Endothelial cell of umbilical vein (primary cell): ENCODE measurements at regions of chr7 and their contacts with region 1.

Region 1: GRCh38 chr7:37430640-37431039 is 18.0 kb downstream of the ELMO1 start:
- DNase-seq: peak; percentile 93
- H3K4me3 ChIP-seq: no peak overlapping the region
- H3K27ac ChIP-seq: peak overlapping the region; percentile 73
- H3K4me1 ChIP-seq: peaks cover 20% of the 10 kb centered on the region
- H3K27me3 ChIP-seq: no peaks in the 10 kb centered on the region
- CTCF ChIP-seq: no peak
- POLR2A ChIP-seq: no peak

Region 2: GRCh38 chr7:37320501-37321468 is 109.9 kb before region 1 on chr7:
- CTCF ChIA-PET with region 1: no interaction called
- POLR2A ChIA-PET with region 1: no interaction called
- dilution Hi-C with region 1: no loop called
- intact Hi-C with region 1: no loop called
- DNase-seq: no peak
- H3K4me3 ChIP-seq: no peak overlapping the region
- H3K27ac ChIP-seq: no peak overlapping the region
- H3K4me1 ChIP-seq: no peaks in the 10 kb centered on the region
- H3K27me3 ChIP-seq: no peaks in the 10 kb centered on the region
- CTCF ChIP-seq: no peak
- POLR2A ChIP-seq: no peak

Region 3: DNA sequence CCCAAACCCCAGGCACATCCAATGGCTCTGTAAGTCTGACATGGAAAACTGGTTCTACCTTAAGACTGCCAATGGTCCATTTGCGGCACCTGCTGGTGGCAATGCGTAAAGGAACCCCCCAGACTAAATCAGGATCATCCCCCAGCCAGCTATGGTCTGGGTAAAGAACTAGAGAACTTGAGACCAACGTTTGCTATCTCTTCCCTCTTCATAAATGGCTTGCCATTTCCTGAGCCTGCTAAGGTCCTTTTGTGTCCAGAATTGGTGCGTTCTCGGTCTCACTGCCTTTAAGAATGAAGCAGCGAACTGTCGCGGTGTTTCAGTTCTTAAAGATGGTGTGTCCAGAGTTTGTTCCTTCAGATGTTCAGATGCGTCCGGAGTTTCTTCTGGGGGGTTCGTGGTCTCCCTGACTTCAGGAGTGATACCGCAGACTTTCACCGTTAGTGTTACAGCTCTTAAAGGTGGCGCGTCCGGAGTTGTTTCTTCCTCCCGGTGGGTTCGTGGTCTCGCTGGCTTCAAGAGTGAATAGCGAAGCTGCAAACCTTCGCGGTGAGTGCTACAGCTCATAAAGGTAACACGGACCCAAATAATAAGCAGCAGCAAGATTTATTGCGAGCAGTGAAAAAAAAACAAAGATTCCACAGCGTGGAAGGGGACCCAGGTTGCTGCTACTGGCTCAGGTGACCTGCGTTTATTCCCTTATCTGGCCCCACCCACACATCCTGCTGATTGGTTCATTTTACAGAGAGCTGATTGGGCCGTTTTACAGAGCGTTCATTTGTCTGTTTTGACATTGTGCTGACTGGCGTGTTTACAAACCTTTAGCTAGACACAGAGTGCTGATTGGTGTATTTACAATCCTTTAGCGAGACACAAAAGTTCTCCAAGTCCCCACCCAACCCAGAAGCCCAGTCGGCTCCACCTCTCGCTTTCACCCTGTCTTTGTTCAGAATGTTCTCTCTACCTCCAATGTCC is 77.4 kb before region 1 on chr7:
- CTCF ChIA-PET with region 1: no interaction called
- POLR2A ChIA-PET with region 1: no interaction called
- dilution Hi-C with region 1: no loop called
- intact Hi-C with region 1: loop called (anchors 1 kb)
- DNase-seq: no peak
- H3K4me3 ChIP-seq: no peak overlapping the region
- H3K27ac ChIP-seq: peak overlapping the region; percentile 66
- H3K4me1 ChIP-seq: peaks cover 21% of the 10 kb centered on the region
- H3K27me3 ChIP-seq: no peaks in the 10 kb centered on the region
- CTCF ChIP-seq: peak; percentile 6 to 11
- POLR2A ChIP-seq: no peak

Region 4: DNA sequence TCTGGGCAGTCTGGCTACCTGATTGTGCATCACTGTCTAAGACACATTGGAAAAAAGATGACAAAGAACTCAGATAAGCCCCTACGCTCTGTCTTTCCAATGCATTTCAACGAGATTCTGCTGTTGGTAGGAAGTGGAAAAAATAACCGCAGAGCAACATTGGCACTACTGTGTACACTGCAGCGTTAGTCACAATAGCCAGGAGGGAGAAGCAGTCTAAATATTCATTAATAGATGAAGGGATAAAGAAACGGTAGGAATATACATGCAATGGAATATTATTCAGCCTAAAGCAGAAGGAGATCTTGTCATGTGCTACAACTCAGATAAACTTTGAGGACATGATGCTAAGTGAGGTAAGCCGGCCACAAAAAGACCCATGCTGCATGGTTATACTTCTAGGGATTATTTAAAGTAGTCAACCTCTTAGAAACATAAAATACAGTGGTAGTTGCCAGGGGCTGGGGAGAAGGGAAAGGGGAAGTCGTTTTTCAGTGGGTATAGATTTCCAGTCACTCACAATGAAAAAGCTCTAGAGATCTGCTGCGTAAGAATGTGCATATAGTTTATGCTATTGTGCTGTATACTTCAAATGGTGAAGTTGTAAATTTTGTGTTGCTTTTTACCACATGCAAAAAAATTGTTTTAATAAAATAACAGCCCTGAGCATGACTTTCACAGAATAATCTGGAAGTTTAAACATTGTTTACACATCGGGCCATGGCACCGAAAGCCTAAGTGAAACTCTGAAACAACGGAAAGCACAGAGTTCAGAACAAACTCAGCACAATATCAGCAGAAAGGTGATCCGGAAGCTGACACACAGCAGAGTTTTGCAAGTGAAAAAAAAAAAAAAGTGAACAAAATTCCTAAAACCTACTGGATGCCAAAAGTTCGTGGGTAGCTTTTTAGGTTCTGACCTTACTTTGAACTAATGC is 22.1 kb before region 1 on chr7:
- CTCF ChIA-PET with region 1: interaction called, 4 read pairs
- POLR2A ChIA-PET with region 1: no interaction called
- dilution Hi-C with region 1: no loop called
- intact Hi-C with region 1: loop called (anchors 2 kb)
- DNase-seq: peak; percentile 73
- H3K4me3 ChIP-seq: peak overlapping the region in 1 of 3 experiments; percentile 49
- H3K27ac ChIP-seq: no peak overlapping the region
- H3K4me1 ChIP-seq: peaks cover 18% of the 10 kb centered on the region
- H3K27me3 ChIP-seq: no peaks in the 10 kb centered on the region
- CTCF ChIP-seq: no peak
- POLR2A ChIP-seq: no peak

Region 5: DNA sequence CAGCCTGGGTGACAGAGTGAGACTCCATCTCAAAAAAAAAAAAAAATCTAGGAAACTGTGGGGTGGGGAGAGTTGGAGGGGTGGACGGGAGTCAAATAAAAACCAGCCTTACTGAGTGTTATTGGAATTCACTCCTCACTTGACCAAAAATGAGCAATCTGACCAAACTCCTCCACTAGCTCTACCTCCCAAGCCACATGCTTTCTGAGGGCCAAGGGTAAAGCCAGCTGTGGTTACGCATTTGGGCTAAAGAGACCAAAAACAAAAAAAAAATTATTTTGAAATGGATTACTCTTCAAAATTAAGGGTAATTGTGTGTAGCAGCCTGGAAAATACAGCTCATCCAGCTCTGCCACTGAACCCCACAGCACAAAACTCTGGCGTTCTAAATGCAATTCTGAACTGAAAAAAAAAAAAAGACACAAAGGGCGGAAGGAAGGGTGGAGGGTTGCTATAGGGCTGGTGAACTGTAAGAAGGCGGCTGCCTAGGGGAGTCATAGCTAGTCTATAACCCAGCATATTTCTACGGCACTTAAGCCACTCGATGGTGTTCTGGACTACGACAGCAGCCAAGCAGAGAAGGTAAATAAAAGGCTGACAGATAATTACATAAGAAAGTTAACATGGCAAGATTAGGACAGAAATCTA is 10.2 kb after region 1 on chr7:
- CTCF ChIA-PET with region 1: interaction called, 6 read pairs
- POLR2A ChIA-PET with region 1: no interaction called
- dilution Hi-C with region 1: no loop called
- intact Hi-C with region 1: loop called (anchors 1 kb)
- DNase-seq: peak; percentile 91
- H3K4me3 ChIP-seq: peak overlapping the region in 1 of 3 experiments; percentile 45
- H3K27ac ChIP-seq: peak overlapping the region; percentile 91
- H3K4me1 ChIP-seq: peaks cover 22% of the 10 kb centered on the region
- H3K27me3 ChIP-seq: no peaks in the 10 kb centered on the region
- CTCF ChIP-seq: no peak
- POLR2A ChIP-seq: no peak

Region 6: DNA sequence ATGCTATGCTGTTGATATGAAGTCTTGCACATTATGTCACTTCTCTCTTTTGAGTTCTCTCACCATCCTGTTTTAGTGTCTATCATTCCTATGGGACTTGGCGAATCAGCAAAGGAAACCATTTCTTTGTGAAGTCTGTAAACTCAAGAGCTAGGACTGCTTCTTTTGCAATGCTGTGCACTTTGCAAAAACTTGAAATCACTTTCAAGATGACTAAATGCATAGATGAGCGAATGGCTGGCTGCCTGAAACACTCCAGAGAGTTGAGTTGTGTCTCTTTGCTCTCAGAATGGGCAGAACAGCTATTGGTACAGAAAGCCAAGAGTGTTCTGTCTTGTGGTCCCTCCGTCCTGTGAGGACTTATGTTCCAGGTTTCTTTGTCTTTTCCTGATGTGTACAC is 36.4 kb after region 1 on chr7:
- CTCF ChIA-PET with region 1: no interaction called
- POLR2A ChIA-PET with region 1: no interaction called
- dilution Hi-C with region 1: no loop called
- intact Hi-C with region 1: no loop called
- DNase-seq: no peak
- H3K4me3 ChIP-seq: no peak overlapping the region
- H3K27ac ChIP-seq: no peak overlapping the region
- H3K4me1 ChIP-seq: peaks cover 3% of the 10 kb centered on the region
- H3K27me3 ChIP-seq: no peaks in the 10 kb centered on the region
- CTCF ChIP-seq: no peak
- POLR2A ChIP-seq: no peak

Region 7: GRCh38 chr7:37480041-37481031 is 49.7 kb after region 1 on chr7:
- CTCF ChIA-PET with region 1: no interaction called
- POLR2A ChIA-PET with region 1: no interaction called
- dilution Hi-C with region 1: no loop called
- intact Hi-C with region 1: loop called (anchors 1 kb)
- DNase-seq: peak; percentile 86
- H3K4me3 ChIP-seq: no peak overlapping the region
- H3K27ac ChIP-seq: peak overlapping the region; percentile 63
- H3K4me1 ChIP-seq: peaks cover 23% of the 10 kb centered on the region
- H3K27me3 ChIP-seq: no peaks in the 10 kb centered on the region
- CTCF ChIP-seq: no peak
- POLR2A ChIP-seq: peak; percentile 40

Region 8: DNA sequence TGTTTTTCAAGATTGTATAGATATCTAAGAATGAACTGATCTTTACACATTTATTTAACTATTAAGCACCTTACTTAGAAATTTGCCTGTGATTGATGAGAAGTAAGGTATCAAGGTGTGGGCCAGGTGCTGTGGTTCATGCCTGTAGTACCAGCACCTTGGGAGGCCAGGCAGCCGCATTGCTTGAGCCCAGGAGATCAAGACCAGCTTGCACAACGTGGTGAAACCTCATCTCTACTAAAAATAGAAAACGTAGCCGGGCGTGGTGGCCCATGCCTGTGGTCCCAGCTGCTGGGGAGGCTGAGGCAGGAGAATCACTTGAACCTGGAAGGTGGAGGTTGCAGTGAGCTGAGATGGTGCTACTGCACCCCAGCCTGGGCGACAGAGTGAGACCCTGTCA is 451.4 kb after region 1 on chr7:
- CTCF ChIA-PET with region 1: no interaction called
- POLR2A ChIA-PET with region 1: no interaction called
- dilution Hi-C with region 1: no loop called
- intact Hi-C with region 1: no loop called
- DNase-seq: no peak
- H3K4me3 ChIP-seq: no peak overlapping the region
- H3K27ac ChIP-seq: no peak overlapping the region
- H3K4me1 ChIP-seq: no peaks in the 10 kb centered on the region
- H3K27me3 ChIP-seq: no peaks in the 10 kb centered on the region
- CTCF ChIP-seq: no peak
- POLR2A ChIP-seq: no peak